Panc1 (cell line): ENCODE measurements at regions of chr12 and their contacts with region 1.

Region 1: GRCh38 chr12:29380536-29381523 is at the start of gene ERGIC2:
- DNase-seq: peak; percentile 99
- ATAC-seq: peak; percentile 99
- H3K4me3 ChIP-seq: peak within 1 kb of the TSS; percentile 95 to 99
- H3K27ac ChIP-seq: peak within 1 kb of the TSS; percentile 94
- H3K4me1 ChIP-seq: peaks cover 8% of the 10 kb centered on the region
- H3K27me3 ChIP-seq: peaks cover 10% of the 10 kb centered on the region
- CTCF ChIP-seq: no peak
- total RNA-seq, gene ERGIC2: 90.2 TPM

Region 2: DNA sequence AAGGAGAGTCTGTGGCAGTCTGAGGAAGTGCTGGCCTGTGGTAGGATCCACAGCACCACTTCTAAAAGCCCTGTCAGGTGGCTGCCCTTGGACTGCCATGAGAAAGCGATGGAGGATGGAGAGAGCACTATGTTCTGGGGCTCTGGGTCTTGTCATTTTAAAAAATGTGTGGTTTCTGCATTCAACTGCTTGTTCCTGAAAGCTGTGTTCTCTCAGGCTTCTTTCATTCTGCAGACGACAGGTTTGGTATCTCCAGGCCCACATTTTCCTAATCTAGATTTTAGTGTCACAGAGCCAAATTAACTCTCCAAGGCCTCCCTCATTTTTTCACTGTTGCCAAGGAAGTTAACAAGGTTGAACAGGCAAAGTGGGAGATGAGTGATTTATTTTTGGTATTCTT is 106.1 kb after region 1 on chr12:
- CTCF ChIA-PET with region 1: no interaction called
- POLR2A ChIA-PET with region 1: no interaction called
- in situ Hi-C with region 1: no loop called
- intact Hi-C with region 1: no loop called
- DNase-seq: no peak
- ATAC-seq: no peak
- H3K4me3 ChIP-seq: no peak overlapping the region
- H3K27ac ChIP-seq: no peak overlapping the region
- H3K4me1 ChIP-seq: no peaks in the 10 kb centered on the region
- H3K27me3 ChIP-seq: peaks cover 8% of the 10 kb centered on the region; the same call in 1 of the 2 replicates
- CTCF ChIP-seq: no peak

Region 3: GRCh38 chr12:30822385-30823155 is 1441.7 kb after region 1 on chr12:
- CTCF ChIA-PET with region 1: interaction called, 11 read pairs
- POLR2A ChIA-PET with region 1: no interaction called
- in situ Hi-C with region 1: no loop called
- intact Hi-C with region 1: no loop called
- DNase-seq: no peak
- ATAC-seq: peak; percentile 92
- H3K4me3 ChIP-seq: peak overlapping the region; percentile 48 to 67
- H3K27ac ChIP-seq: peak overlapping the region; percentile 48
- H3K4me1 ChIP-seq: peaks cover 10% of the 10 kb centered on the region
- H3K27me3 ChIP-seq: no peaks in the 10 kb centered on the region; the same call in 1 of the 2 replicates
- CTCF ChIP-seq: peak; percentile 9; the same call in 1 of the 2 replicates